ENCODE measurements at regions of chr1 and their contacts with region 1.

Region 1: DNA sequence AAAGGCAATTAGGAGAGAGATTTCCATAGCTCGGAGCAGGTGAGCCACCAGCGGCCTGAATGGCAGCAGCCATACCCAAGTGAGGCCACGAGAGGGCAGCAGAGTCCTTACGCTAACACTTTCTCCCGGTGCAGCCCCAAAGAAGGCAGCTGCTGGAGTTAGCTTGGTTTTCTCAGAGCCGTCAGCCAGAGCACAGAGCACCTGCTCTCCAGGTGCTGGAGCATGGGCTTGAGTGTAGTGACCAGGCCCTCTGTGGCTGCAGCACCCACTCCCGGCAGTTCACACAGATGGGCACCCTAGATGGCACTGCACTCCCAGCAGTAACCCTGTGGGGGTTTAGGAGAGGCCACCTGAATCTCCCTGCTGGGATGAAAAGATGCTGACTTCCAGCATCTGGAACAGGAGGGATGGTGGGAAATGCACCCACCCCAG is 45.8 kb downstream of the TMCC2 start:
- DNase-seq: peak; percentile 96
- H3K27ac ChIP-seq: peak overlapping the region; percentile 90
- CTCF ChIP-seq: peak; percentile 97

Region 2: DNA sequence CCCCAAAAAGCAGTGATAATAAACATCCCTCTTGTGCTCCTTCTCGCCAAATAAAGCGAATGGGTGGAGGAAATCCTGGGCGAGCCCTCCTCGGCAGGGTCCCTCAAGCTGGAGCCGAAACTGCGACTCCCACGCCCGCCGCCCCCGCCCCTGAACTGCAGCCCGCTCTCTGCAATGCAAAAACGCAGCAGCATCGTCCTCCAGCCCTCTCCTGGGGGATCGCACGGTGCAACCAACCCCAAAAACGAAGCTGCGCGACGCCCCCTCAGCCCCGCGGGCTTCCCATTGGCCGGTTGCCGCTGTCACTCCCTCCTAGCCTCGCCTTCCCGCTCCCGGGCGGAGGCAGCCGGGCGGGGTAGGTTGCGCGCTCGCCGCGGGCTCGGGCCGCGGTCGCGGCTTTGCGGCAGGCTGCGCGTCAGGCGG is 46.0 kb before region 1 on chr1 and contains the start of gene TMCC2:
- CTCF ChIA-PET with region 1: interaction called, 15 read pairs
- POLR2A ChIA-PET with region 1: interaction called, 3 read pairs
- DNase-seq: peak; percentile 98
- H3K27ac ChIP-seq: peak within 1 kb of the TSS; percentile 78
- CTCF ChIP-seq: no peak

Region 3: GRCh38 chr1:205284343-205285144 is 11.0 kb after region 1 on chr1:
- CTCF ChIA-PET with region 1: interaction called, 29 read pairs
- POLR2A ChIA-PET with region 1: interaction called, 3 read pairs
- DNase-seq: peak; percentile 100
- H3K27ac ChIP-seq: peak overlapping the region; percentile 97
- CTCF ChIP-seq: no peak

Region 4: GRCh38 chr1:205300886-205301821 is 27.6 kb after region 1 on chr1:
- CTCF ChIA-PET with region 1: interaction called, 23 read pairs
- POLR2A ChIA-PET with region 1: no interaction called
- DNase-seq: peak; percentile 84
- H3K27ac ChIP-seq: peak overlapping the region; percentile 85
- CTCF ChIP-seq: no peak

Region 5: GRCh38 chr1:205321164-205321958 is 47.8 kb after region 1 on chr1 and contains the start of gene NUAK2:
- CTCF ChIA-PET with region 1: interaction called, 622 read pairs
- POLR2A ChIA-PET with region 1: interaction called, 26 read pairs
- DNase-seq: peak; percentile 96
- H3K27ac ChIP-seq: peak within 1 kb of the TSS; percentile 98
- CTCF ChIP-seq: peak; percentile 33

Region 6: DNA sequence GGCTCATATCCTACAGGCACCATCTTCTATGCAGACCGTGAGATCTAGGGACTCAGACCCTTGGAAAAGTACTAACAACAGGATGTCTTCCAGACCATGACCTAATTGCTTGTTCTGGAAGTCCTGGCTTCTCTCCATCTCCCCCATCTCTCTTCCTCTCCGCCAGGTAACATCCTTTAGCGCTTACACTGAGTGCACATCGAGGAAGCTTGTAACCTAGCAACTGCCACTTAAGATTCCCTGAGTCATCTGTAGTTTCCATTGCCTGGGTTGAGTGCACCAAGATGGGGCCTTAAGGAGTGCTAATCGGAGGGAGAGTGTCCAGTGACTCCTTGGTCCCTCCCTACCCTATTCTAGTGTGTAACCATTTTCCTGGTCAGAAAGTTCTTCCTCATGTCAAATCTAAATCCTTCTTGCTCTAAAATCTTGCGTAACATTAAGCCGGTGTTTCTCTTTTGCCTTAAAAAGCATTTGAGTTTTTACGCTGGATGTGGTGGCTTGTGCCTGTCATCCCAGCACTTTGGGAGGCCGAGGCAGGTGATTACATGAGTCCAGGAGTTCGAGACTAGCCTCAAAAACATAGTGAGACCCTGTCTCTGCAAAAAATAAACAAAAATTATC is 73.5 kb after region 1 on chr1:
- CTCF ChIA-PET with region 1: interaction called, 11 read pairs
- POLR2A ChIA-PET with region 1: no interaction called
- DNase-seq: peak; percentile 30
- H3K27ac ChIP-seq: no peak overlapping the region
- CTCF ChIP-seq: no peak